HCT116 (cell line): ENCODE measurements at regions of chr20 and their contacts with region 1.

Region 1: DNA sequence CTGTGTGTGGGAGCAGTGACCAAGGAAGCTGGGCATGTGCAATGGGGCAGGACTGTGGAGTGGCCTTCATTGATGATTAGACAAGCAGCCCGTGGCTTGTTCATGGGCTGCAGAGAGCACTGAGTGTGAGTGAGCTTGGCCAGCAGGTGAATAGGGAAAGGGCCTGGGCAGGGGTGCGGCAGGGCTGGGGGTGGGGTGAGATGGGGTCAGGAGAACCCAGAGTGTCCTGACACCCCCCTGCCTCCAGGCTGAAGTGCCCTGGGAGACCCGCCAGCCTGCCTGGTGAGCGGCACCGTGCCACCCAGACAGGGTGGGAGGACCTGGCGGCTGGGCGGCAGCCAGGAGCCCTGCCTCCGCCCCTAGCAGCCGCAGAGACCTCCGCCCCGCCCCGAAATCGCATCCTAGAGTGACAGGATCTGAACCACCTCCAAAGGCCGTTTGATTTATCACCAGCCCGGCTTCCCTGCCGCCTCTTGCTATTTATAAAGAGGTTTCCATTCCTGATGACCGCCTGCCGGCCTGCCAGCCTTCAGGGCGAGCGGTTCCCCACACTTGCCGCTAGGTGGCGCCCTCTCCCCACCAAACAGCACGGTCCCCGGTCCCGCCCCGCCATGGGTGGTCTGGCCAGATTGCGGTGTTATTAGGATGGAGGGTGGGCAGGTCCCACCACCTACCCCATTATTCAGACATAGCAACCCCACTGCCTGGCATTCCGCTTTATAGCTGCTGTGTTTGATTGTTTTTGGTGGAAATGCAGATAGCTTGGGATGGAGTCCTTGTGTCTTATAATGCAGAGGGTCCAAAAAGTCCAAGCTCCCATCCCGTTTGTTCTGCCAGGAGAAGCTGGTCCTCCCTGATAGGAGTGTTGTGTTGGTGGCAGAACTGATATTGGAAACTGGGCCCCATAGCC is 3.5 kb downstream of the MYLK2 start:
- DNase-seq: no peak
- ATAC-seq: peak; percentile 92
- H3K4me3 ChIP-seq: no peak overlapping the region; a peak in 1 of 4 replicates
- H3K27ac ChIP-seq: no peak overlapping the region
- H3K4me1 ChIP-seq: peaks cover 0 to 9% of the 10 kb centered on the region in 2 experiments; a peak in 1 of 4 replicates
- H3K27me3 ChIP-seq: no peaks in the 10 kb centered on the region
- CTCF ChIP-seq: peak; percentile 91 to 99 (median 95)
- POLR2A ChIP-seq: no peak
- RAD21 ChIP-seq: peak; percentile 98

Region 2: DNA sequence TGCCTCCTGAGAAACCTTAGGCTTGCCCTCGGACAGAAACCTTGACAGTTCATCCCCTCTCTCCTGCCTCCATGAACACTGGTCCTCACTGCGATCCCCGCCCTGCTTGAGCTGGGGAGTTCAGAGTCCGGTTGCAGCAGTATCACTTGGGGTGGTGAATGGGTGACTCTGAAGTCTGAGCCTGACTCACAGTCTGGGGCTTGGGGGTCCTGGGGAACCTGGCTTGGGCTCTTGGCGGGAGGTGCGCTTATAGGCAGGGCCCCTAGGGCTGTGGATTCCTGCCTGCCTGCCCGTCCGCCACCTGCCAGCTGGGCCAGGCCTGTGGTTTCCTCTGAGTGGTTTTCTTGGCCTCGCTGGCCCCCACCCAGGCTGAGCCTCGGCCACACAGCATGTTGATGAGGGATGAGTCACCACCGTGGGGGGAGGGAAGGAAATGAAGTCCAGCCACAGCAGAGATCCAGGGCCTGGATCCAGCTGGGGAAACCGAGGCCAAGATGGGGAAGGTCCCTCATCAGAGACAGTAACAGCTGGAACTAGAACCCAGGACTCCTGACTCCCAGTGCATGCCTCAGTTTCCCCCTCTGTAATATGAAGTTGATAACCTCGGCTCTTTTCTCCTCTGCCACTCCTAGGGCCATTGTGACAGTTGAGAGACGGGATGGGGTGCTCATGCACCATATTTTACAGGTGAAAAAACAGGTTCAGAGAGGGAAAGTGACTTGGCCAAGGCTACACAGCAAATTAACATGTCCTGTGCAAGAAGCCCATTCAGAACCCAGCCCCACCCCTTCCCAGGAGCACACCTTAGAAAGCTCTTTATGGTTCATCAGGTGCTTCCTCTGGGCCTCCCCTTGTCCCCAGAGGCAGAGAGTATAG is 13.5 kb after region 1 on chr20:
- CTCF ChIA-PET with region 1: interaction called, 10 read pairs
- POLR2A ChIA-PET with region 1: interaction called, 4 read pairs
- RAD21 ChIA-PET with region 1: interaction called, 3 read pairs
- intact Hi-C with region 1: no loop called
- DNase-seq: peak; percentile 51
- ATAC-seq: peak; percentile 86
- H3K4me3 ChIP-seq: peak overlapping the region in 1 of 2 experiments; percentile 7; a peak in 2 of 4 replicates
- H3K27ac ChIP-seq: no peak overlapping the region; the same call in 1 of the 2 replicates
- H3K4me1 ChIP-seq: peaks cover 17 to 46% of the 10 kb centered on the region in 2 experiments
- H3K27me3 ChIP-seq: no peaks in the 10 kb centered on the region
- CTCF ChIP-seq: no peak
- POLR2A ChIP-seq: no peak
- RAD21 ChIP-seq: no peak

Region 3: GRCh38 chr20:32031007-32031958 is 208.6 kb after region 1 on chr20:
- CTCF ChIA-PET with region 1: interaction called, 7 read pairs
- POLR2A ChIA-PET with region 1: no interaction called
- RAD21 ChIA-PET with region 1: no interaction called
- intact Hi-C with region 1: loop called (anchors 1 kb)
- DNase-seq: peak; percentile 84
- ATAC-seq: peak; percentile 99
- H3K4me3 ChIP-seq: no peak overlapping the region
- H3K27ac ChIP-seq: no peak overlapping the region
- H3K4me1 ChIP-seq: peaks cover 4 to 6% of the 10 kb centered on the region in 2 experiments; a peak in 2 of 4 replicates
- H3K27me3 ChIP-seq: peaks cover 25% of the 10 kb centered on the region
- CTCF ChIP-seq: peak; percentile 92 to 99 (median 95)
- POLR2A ChIP-seq: no peak
- RAD21 ChIP-seq: peak; percentile 89

Region 4: DNA sequence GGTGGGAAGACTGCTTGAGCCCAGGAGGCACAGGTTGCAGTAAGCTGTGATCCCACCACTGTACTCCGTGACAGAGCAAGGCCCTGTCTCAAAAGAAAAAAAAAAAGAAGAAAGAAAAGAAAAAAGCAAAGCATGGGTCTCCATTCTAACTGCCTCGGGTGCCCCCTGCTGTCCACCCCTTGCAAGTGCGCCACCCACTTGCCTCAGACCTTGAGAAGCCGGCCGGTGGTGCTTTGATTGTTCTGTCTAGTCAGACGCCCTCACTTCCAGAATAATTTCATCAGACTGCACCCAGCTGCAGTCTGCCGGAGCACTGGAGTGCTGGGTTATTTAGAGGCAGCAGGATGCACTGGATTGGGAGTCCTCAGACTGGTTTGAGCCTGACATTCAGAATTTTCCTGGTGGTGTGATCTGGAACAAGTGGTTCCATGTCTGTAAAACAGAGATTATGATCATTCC is 269.2 kb after region 1 on chr20:
- CTCF ChIA-PET with region 1: interaction called, 3 read pairs
- POLR2A ChIA-PET with region 1: no interaction called
- RAD21 ChIA-PET with region 1: no interaction called
- intact Hi-C with region 1: loop called (anchors 1 kb)
- DNase-seq: peak; percentile 62
- ATAC-seq: peak; percentile 93
- H3K4me3 ChIP-seq: no peak overlapping the region
- H3K27ac ChIP-seq: no peak overlapping the region
- H3K4me1 ChIP-seq: peaks cover 0 to 2% of the 10 kb centered on the region in 2 experiments; a peak in 1 of 4 replicates
- H3K27me3 ChIP-seq: no peaks in the 10 kb centered on the region; the same call in 1 of the 2 replicates
- CTCF ChIP-seq: peak; percentile 71 to 93 (median 89)
- POLR2A ChIP-seq: no peak
- RAD21 ChIP-seq: peak; percentile 70

Region 5: DNA sequence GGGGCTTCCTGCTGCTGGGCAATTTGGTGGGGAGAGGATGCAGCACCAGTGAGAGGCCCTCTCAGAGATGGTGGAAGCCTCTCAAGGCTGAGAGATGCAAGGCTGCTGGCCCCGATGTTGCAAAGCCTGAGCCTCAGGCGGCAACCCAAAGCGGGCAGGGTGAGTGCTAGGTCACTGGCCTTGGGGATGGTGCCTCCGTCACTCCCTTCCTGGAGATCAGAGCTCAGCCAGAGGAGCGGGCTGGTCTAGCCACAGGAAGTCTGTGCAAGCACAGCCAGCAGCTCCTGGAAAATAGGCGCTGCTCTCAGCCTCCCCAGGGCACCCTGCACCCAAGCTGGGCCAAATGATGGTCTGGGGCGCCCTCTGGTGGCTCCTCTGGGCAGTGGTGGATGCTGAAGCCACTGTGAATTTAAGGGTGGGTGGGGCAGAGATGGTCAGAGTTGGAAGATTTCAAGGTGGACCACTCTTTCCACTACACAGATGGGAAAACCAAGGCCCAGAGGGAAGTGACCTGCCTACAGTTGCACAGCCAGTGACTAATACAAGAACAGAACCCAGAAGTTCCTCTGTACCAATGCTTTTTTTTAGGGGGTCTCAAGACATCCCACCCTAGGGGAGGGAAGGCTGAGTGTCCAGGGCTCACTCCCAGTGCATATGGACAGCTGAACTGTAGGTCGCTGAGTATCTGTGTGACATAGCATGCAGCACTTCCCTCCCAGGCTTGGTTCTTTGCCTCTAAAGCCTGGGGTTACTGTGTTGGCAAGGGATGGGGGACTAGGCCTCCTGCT is 830.3 kb after region 1 on chr20:
- CTCF ChIA-PET with region 1: interaction called, 5 read pairs
- POLR2A ChIA-PET with region 1: no interaction called
- RAD21 ChIA-PET with region 1: no interaction called
- intact Hi-C with region 1: loop called (anchors 2 kb)
- DNase-seq: peak; percentile 54
- ATAC-seq: peak; percentile 96
- H3K4me3 ChIP-seq: no peak overlapping the region
- H3K27ac ChIP-seq: no peak overlapping the region
- H3K4me1 ChIP-seq: peaks cover 0 to 11% of the 10 kb centered on the region in 2 experiments; a peak in 1 of 4 replicates
- H3K27me3 ChIP-seq: no peaks in the 10 kb centered on the region
- CTCF ChIP-seq: peak; percentile 87 to 91 (median 88)
- POLR2A ChIP-seq: no peak
- RAD21 ChIP-seq: peak; percentile 99